Panc1 (cell line): ENCODE measurements at regions of chr2 and their contacts with region 1.

Region 1: GRCh38 chr2:63627866-63628265 is 39.1 kb downstream of the MDH1 start:
- DNase-seq: no peak
- ATAC-seq: no peak
- H3K4me3 ChIP-seq: no peak overlapping the region
- H3K27ac ChIP-seq: no peak overlapping the region
- H3K4me1 ChIP-seq: no peaks in the 10 kb centered on the region
- H3K27me3 ChIP-seq: no peaks in the 10 kb centered on the region
- CTCF ChIP-seq: no peak

Region 2: DNA sequence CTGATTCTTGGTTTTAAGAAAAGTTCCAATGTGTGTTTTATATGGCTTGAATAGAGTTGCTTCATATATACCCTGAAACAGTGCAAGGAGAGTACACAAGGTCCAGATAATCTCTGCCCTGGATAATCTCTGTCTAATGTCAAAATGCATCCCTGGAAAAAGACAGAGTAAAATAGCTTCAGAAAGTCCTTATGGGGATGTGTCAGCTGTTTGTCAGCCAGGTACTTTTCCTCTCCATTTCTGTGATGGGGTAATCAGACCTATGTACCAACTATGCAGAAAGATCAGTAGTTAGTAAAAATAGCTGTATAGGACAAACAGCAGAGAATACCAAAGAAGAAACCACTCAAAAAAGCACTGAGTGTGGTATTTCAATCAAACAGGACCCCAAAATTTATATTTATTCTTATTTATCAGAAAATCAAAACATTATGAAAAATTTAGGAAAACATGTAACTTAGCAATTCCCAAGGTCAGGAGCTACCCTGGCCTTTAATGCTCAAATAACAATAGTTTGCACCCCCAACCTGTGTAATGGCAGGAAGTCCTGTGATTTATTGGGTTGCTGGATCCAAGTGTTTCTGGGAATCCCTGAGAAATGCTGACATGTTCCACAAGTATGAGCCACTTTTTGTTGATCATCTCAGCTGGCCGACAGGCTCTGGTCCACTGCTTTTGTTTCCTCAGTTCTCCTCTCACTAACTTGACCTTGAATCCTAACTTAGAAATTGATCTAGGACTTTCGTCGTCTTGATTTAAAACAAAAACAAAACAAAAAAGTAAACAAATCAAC is 30.5 kb after region 1 on chr2:
- CTCF ChIA-PET with region 1: no interaction called
- POLR2A ChIA-PET with region 1: no interaction called
- in situ Hi-C with region 1: no loop called
- intact Hi-C with region 1: loop called (anchors 2 kb)
- DNase-seq: no peak
- ATAC-seq: no peak
- H3K4me3 ChIP-seq: no peak overlapping the region
- H3K27ac ChIP-seq: no peak overlapping the region
- H3K4me1 ChIP-seq: no peaks in the 10 kb centered on the region
- H3K27me3 ChIP-seq: 0 out of 2 replicates have a peak, but pooled peaks cover 8% of the 10 kb centered on the region
- CTCF ChIP-seq: no peak